Ovary (tissue), 10 donors: ENCODE measurements at regions of chr7 and their contacts with region 1.

Region 1: DNA sequence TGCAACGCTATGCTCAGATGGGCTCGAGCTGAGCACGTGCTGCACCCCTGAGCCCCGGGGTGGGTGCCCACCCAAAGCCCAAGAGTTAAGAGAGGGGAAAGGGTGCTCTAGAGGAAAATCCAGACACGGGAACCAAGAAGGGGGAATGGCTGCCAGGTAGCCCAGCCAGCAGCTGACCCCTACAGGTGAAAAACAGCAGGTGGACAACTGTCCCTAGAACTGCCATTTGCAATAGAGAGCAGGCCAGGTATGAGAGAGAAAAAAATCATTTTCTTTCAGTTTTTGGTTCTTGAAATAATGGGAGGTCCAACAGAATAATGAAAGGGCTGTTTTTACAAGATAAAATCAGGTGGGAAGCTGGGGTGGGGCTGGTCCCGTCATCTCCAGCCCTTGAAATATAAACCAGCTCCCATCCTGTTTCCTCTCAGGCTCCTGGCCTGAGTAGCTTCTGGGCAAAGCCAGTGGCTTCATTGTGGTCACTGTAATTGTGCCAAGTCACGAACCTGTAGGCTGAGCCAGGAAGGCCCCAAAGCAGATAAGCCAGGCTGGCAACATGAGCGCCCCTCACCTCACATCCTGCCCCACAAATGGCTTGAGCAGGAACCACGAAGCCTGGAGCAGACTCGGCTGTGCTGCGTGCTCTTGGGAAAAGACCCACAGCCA is 257.8 kb downstream of the SNX10 start:
- DNase-seq: no peak
- H3K4me3 ChIP-seq: no peak overlapping the region
- H3K27ac ChIP-seq: no peak overlapping the region
- H3K4me1 ChIP-seq: no peaks in the 10 kb centered on the region
- H3K27me3 ChIP-seq: no peaks in the 10 kb centered on the region
- CTCF ChIP-seq: no peak
- EP300 ChIP-seq: no peak
- POLR2A ChIP-seq: no peak

Region 2: DNA sequence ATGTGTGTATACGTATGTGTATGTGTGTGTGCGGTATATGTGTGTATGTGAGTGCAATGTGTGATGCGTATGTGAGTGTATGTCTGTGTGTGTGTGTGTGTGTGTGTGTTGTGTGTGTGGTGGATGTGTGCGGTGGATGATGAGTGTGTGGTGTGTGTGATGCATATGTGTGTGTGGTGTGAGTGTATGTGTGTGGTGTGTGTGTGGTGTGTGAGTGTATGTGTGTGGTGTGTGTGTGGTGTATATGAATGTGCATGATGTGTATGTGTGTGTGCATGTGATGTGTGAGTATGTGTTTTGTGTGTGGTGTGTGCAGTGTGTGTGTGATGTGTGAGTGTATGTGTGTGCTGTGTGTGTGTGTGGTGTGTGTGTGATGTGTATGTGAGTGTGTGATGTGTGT is 93.0 kb after region 1 on chr7:
- intact Hi-C with region 1: loop called in 1 of 4 experiments (anchors 5 kb)
- DNase-seq: no peak
- H3K4me3 ChIP-seq: no peak overlapping the region
- H3K27ac ChIP-seq: no peak overlapping the region
- H3K4me1 ChIP-seq: no peaks in the 10 kb centered on the region
- H3K27me3 ChIP-seq: no peaks in the 10 kb centered on the region
- CTCF ChIP-seq: no peak
- EP300 ChIP-seq: no peak
- POLR2A ChIP-seq: no peak